ENCODE measurements at regions of chr3 and their contacts with region 1.

Region 1: DNA sequence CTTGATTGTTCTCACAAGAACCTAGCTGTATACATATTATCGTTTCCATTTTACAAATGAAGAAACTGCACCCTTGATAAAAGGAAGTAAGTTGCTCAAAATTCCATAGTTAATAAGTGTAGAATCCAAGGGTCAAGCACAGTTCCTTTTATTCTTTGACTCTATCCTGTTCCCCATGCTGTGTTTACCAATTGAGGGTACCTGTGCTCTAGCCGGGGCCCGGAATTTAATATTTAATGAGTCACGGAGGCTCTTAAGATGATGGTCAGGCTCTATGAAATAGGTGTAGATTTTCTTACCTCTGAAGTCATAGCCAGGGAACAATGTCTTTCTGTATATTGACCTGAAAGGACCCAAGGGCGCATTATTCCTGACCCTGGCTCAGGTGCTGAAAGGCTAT is 65.2 kb downstream of the LPP start:
- DNase-seq: peak; percentile 80
- H3K4me3 Mint-ChIP-seq: no peak overlapping the region
- H3K27ac Mint-ChIP-seq: peak overlapping the region; percentile 62
- H3K4me1 Mint-ChIP-seq: peaks cover 88% of the 10 kb centered on the region
- H3K27me3 Mint-ChIP-seq: no peaks in the 10 kb centered on the region
- CTCF ChIP-seq: no peak

Region 2: DNA sequence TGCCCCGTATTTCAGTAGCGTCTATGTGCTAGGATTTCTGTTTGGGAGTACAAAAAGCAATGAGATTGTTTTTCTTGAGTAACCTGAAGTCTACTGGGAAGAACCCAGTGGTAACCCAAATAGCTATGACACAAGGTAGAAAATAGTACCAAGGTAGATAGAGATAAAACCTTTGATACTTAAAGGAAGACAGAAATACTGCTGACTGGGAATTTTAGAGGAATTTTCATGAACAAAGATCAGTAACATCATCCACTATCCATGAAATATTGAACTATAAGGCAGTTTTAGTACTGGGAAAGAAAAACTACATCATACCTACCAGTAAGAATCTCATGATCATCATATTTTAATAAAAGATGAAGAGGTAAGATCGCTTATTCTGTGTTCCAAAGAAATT is 424.6 kb after region 1 on chr3:
- CTCF ChIA-PET with region 1: interaction called, 10 read pairs
- intact Hi-C with region 1: no loop called
- DNase-seq: no peak
- H3K4me3 Mint-ChIP-seq: no peak overlapping the region
- H3K27ac Mint-ChIP-seq: no peak overlapping the region
- H3K4me1 Mint-ChIP-seq: no peaks in the 10 kb centered on the region
- H3K27me3 Mint-ChIP-seq: no peaks in the 10 kb centered on the region
- CTCF ChIP-seq: no peak

Region 3: DNA sequence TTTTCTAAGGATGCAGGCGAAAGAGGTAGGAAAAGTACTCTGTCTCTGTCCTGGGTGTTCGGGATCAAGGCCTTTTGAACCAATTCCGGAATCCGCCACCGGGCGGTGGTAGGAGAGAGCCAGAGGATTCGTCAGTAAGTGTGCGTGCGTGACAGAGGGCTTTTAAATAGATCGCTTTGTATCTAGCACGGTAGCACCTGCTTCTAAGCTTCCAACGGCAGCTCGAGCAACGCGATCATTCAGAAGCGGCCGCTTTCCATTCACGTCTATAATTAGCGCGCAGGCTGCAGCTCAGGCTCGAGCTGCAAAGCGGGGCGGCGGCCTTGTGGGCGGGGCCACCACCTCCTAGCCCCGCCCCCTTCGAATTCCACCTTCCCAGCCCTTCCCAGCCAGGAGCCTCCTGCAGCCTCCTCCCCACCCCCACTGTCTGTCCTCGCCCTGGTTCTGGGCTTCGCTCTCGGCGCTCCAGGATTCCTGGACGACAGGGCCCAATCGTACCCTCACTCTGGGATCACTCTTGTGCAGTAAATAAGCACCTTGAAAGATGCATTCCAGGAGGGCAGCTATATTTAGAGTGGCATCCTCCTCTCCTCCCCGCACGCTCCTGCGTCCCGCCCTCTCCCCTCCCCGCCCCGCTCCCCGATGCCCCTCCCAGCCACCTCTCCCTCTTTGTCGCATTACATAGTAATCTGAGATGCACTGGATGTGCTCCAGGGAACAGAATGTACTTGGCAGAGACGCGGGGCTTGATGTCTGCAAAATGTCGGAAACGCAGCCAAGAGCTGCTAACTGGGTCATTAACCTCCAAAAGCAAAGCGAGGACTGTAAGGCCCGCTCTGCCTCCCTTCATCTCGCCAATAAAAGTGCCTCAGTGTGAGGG is 728.5 kb after region 1 on chr3:
- CTCF ChIA-PET with region 1: no interaction called
- intact Hi-C with region 1: loop called (anchors 1 kb)
- DNase-seq: peak; percentile 94
- H3K4me3 Mint-ChIP-seq: peak overlapping the region; percentile 62
- H3K27ac Mint-ChIP-seq: peak overlapping the region; percentile 90
- H3K4me1 Mint-ChIP-seq: peaks cover 42% of the 10 kb centered on the region
- H3K27me3 Mint-ChIP-seq: no peaks in the 10 kb centered on the region
- CTCF ChIP-seq: peak; percentile 75

Measured in Calu3 (cell line).